ENCODE measurements at regions of chr5 and their contacts with region 1.

Region 1: GRCh38 chr5:81851481-81852178 is 100.7 kb upstream of the SSBP2 start:
- DNase-seq: peak; percentile 83
- ATAC-seq: peak; percentile 94
- H3K4me3 Mint-ChIP-seq: peak overlapping the region; percentile 93
- H3K27ac Mint-ChIP-seq: peak overlapping the region; percentile 94
- H3K4me1 Mint-ChIP-seq: peaks cover 35% of the 10 kb centered on the region
- H3K27me3 Mint-ChIP-seq: no peaks in the 10 kb centered on the region
- CTCF ChIP-seq: no peak

Region 2: GRCh38 chr5:81506900-81507588 is 344.6 kb before region 1 on chr5:
- CTCF ChIA-PET with region 1: interaction called, 5 read pairs
- POLR2A ChIA-PET with region 1: interaction called, 14 read pairs
- intact Hi-C with region 1: loop called (anchors 1 kb)
- DNase-seq: no peak
- ATAC-seq: peak; percentile 100
- H3K4me3 Mint-ChIP-seq: no peak overlapping the region
- H3K27ac Mint-ChIP-seq: no peak overlapping the region
- H3K4me1 Mint-ChIP-seq: peaks cover 6% of the 10 kb centered on the region
- H3K27me3 Mint-ChIP-seq: no peaks in the 10 kb centered on the region
- CTCF ChIP-seq: no peak

Region 3: GRCh38 chr5:81779125-81779915 is 72.3 kb before region 1 on chr5:
- CTCF ChIA-PET with region 1: no interaction called
- POLR2A ChIA-PET with region 1: interaction called, 24 read pairs
- intact Hi-C with region 1: loop called (anchors 2 kb)
- DNase-seq: peak; percentile 26
- ATAC-seq: peak; percentile 94
- H3K4me3 Mint-ChIP-seq: peak overlapping the region; percentile 86
- H3K27ac Mint-ChIP-seq: peak overlapping the region; percentile 95
- H3K4me1 Mint-ChIP-seq: peaks cover 26% of the 10 kb centered on the region
- H3K27me3 Mint-ChIP-seq: no peaks in the 10 kb centered on the region
- CTCF ChIP-seq: no peak

Region 4: GRCh38 chr5:81971712-81972495 is 120.3 kb after region 1 on chr5 and contains the start of gene ATG10:
- CTCF ChIA-PET with region 1: no interaction called
- POLR2A ChIA-PET with region 1: interaction called, 37 read pairs
- intact Hi-C with region 1: loop called (anchors 2 kb)
- DNase-seq: peak; percentile 93
- ATAC-seq: peak; percentile 95
- H3K4me3 Mint-ChIP-seq: peak within 1 kb of the TSS; percentile 88
- H3K27ac Mint-ChIP-seq: peak within 1 kb of the TSS; percentile 86
- H3K4me1 Mint-ChIP-seq: peaks cover 20% of the 10 kb centered on the region
- H3K27me3 Mint-ChIP-seq: no peaks in the 10 kb centered on the region
- CTCF ChIP-seq: no peak
- total RNA-seq, gene ATG10: 5.3 and 7.3 TPM in 2 replicates

Region 5: GRCh38 chr5:82147865-82148573 is 296.4 kb after region 1 on chr5:
- CTCF ChIA-PET with region 1: no interaction called
- POLR2A ChIA-PET with region 1: interaction called, 11 read pairs
- intact Hi-C with region 1: no loop called
- DNase-seq: no peak
- ATAC-seq: no peak
- H3K4me3 Mint-ChIP-seq: no peak overlapping the region
- H3K27ac Mint-ChIP-seq: no peak overlapping the region
- H3K4me1 Mint-ChIP-seq: no peaks in the 10 kb centered on the region
- H3K27me3 Mint-ChIP-seq: no peaks in the 10 kb centered on the region
- CTCF ChIP-seq: no peak

Region 6: GRCh38 chr5:82225525-82226172 is 374.0 kb after region 1 on chr5:
- CTCF ChIA-PET with region 1: no interaction called
- POLR2A ChIA-PET with region 1: no interaction called
- intact Hi-C with region 1: loop called (anchors 1 kb)
- DNase-seq: peak; percentile 33
- ATAC-seq: peak; percentile 89
- H3K4me3 Mint-ChIP-seq: no peak overlapping the region
- H3K27ac Mint-ChIP-seq: no peak overlapping the region
- H3K4me1 Mint-ChIP-seq: peaks cover 3% of the 10 kb centered on the region
- H3K27me3 Mint-ChIP-seq: no peaks in the 10 kb centered on the region
- CTCF ChIP-seq: peak; percentile 60

Region 7: GRCh38 chr5:83076742-83077661 is 1225.4 kb after region 1 on chr5 and contains the starts of genes TMEM167A and XRCC4:
- CTCF ChIA-PET with region 1: no interaction called
- POLR2A ChIA-PET with region 1: no interaction called
- intact Hi-C with region 1: loop called (anchors 10 kb)
- DNase-seq: peak; percentile 80
- ATAC-seq: peak; percentile 99
- H3K4me3 Mint-ChIP-seq: peak within 1 kb of the TSS; percentile 100
- H3K27ac Mint-ChIP-seq: peak within 1 kb of the TSS; percentile 99
- H3K4me1 Mint-ChIP-seq: peaks cover 40% of the 10 kb centered on the region
- H3K27me3 Mint-ChIP-seq: no peaks in the 10 kb centered on the region
- CTCF ChIP-seq: no peak
- total RNA-seq, gene TMEM167A: 45.1 and 50.3 TPM in 2 replicates
- total RNA-seq, gene XRCC4: 8.1 and 8.5 TPM in 2 replicates